CD14-positive monocyte (primary cell): ENCODE measurements at regions of chr13 and their contacts with region 1.

Region 1: GRCh38 chr13:108322206-108322824 is 52.8 kb downstream of the TNFSF13B start:
- DNase-seq: peak; percentile 29 to 71 (median 63)
- H3K4me3 ChIP-seq: peak overlapping the region in 1 of 3 experiments; percentile 17
- H3K4me3 Mint-ChIP-seq: peak overlapping the region in 1 of 2 donors; percentile 59
- H3K27ac ChIP-seq: peak overlapping the region in 1 of 2 donors; percentile 33
- H3K27ac Mint-ChIP-seq: peak overlapping the region; percentile 53 to 90 (median 74)
- H3K4me1 ChIP-seq: peaks cover 44 to 48% of the 10 kb centered on the region in 2 donors
- H3K4me1 Mint-ChIP-seq: peaks cover 48% of the 10 kb centered on the region
- H3K27me3 ChIP-seq: no peaks in the 10 kb centered on the region
- H3K27me3 Mint-ChIP-seq: peaks cover 0 to 4% (median 0%) of the 10 kb centered on the region in 3 donors
- CTCF ChIP-seq: peak; percentile 89

Region 2: GRCh38 chr13:107743983-107744382 is 578.3 kb before region 1 on chr13:
- intact Hi-C with region 1: no loop called
- DNase-seq: no peak
- H3K4me3 ChIP-seq: no peak overlapping the region
- H3K4me3 Mint-ChIP-seq: no peak overlapping the region
- H3K27ac ChIP-seq: no peak overlapping the region
- H3K27ac Mint-ChIP-seq: no peak overlapping the region
- H3K4me1 ChIP-seq: no peaks in the 10 kb centered on the region
- H3K4me1 Mint-ChIP-seq: no peaks in the 10 kb centered on the region
- H3K27me3 ChIP-seq: no peaks in the 10 kb centered on the region
- H3K27me3 Mint-ChIP-seq: peaks cover 0 to 1% (median 0%) of the 10 kb centered on the region in 3 donors
- CTCF ChIP-seq: no peak

Region 3: GRCh38 chr13:108227651-108228272 is 94.6 kb before region 1 on chr13:
- intact Hi-C with region 1: loop called in 1 of 2 experiments (anchors 10 kb)
- DNase-seq: peak; percentile 38 to 53 (median 46)
- H3K4me3 ChIP-seq: no peak overlapping the region
- H3K4me3 Mint-ChIP-seq: no peak overlapping the region
- H3K27ac ChIP-seq: no peak overlapping the region
- H3K27ac Mint-ChIP-seq: peak overlapping the region in 1 of 7 donors; percentile 25
- H3K4me1 ChIP-seq: no peaks in the 10 kb centered on the region
- H3K4me1 Mint-ChIP-seq: peaks cover 9% of the 10 kb centered on the region
- H3K27me3 ChIP-seq: no peaks in the 10 kb centered on the region
- H3K27me3 Mint-ChIP-seq: no peaks in the 10 kb centered on the region
- CTCF ChIP-seq: peak; percentile 90

Region 4: GRCh38 chr13:109211616-109212015 is 889.3 kb after region 1 on chr13:
- intact Hi-C with region 1: no loop called
- DNase-seq: no peak
- H3K4me3 ChIP-seq: no peak overlapping the region
- H3K4me3 Mint-ChIP-seq: no peak overlapping the region
- H3K27ac ChIP-seq: no peak overlapping the region
- H3K27ac Mint-ChIP-seq: no peak overlapping the region
- H3K4me1 ChIP-seq: no peaks in the 10 kb centered on the region
- H3K4me1 Mint-ChIP-seq: no peaks in the 10 kb centered on the region
- H3K27me3 ChIP-seq: no peaks in the 10 kb centered on the region
- H3K27me3 Mint-ChIP-seq: peaks cover 2 to 4% (median 2%) of the 10 kb centered on the region in 3 donors
- CTCF ChIP-seq: no peak